Common myeloid progenitor, CD34-positive (primary cell): ENCODE measurements at regions of chr2 and their contacts with region 1.

Region 1: GRCh38 chr2:174764280-174765255 is at the start of gene CHRNA1:
- DNase-seq: no peak
- H3K4me3 ChIP-seq: no peak within 1 kb of the TSS
- H3K27ac ChIP-seq: no peak within 1 kb of the TSS
- H3K4me1 ChIP-seq: no peaks in the 10 kb centered on the region
- H3K27me3 ChIP-seq: peaks cover 0 to 36% (median 14%) of the 10 kb centered on the region in 5 experiments

Region 2: GRCh38 chr2:174748948-174749347 is 15.6 kb before region 1 on chr2:
- CTCF ChIA-PET with region 1: interaction called, 19 read pairs
- POLR2A ChIA-PET with region 1: no interaction called
- DNase-seq: peak; percentile 54 to 70 (median 63)
- H3K4me3 ChIP-seq: no peak overlapping the region
- H3K27ac ChIP-seq: no peak overlapping the region
- H3K4me1 ChIP-seq: peaks cover 0 to 2% (median 0%) of the 10 kb centered on the region in 4 experiments
- H3K27me3 ChIP-seq: peaks cover 2 to 47% (median 16%) of the 10 kb centered on the region in 5 experiments